Lower leg skin (tissue), 4 donors: ENCODE measurements at regions of chr6 and their contacts with region 1.

Region 1: GRCh38 chr6:124753562-124754105 is 208.6 kb upstream of the RNF217 start:
- DNase-seq: no peak
- H3K4me3 ChIP-seq: no peak overlapping the region
- CTCF ChIP-seq: no peak
- POLR2A ChIP-seq: no peak

Region 2: DNA sequence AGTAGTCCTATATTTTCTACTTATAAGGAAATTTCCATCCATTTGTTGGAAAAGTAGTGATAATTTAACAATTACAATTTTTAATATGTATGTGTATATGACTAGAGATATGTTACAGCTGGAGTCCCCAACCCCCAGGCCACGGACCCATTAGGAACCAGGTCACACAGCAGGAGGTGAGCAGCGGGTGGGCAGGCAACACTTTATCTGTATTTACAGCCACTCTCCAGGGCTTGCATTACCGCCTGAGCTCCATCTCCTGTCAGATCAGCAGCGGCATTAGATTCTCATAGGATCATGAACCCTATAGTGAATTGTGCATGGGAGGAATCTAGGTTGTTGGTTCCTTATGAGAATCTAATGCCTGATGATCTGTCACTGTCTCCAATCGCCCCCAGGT is 1163.7 kb before region 1 on chr6:
- intact Hi-C with region 1: loop called (anchors 5 kb)
- DNase-seq: no peak
- H3K4me3 ChIP-seq: no peak overlapping the region
- CTCF ChIP-seq: no peak
- POLR2A ChIP-seq: no peak